Mammary epithelial cell (primary cell): ENCODE measurements at regions of chr14 and their contacts with region 1.

Region 1: GRCh38 chr14:77660754-77661153 is 44.3 kb upstream of the SPTLC2 start:
- DNase-seq: no peak
- H3K4me3 ChIP-seq: no peak overlapping the region
- H3K27ac ChIP-seq: no peak overlapping the region
- H3K4me1 ChIP-seq: peaks cover 14% of the 10 kb centered on the region
- H3K27me3 ChIP-seq: no peaks in the 10 kb centered on the region
- CTCF ChIP-seq: no peak

Region 2: GRCh38 chr14:77799863-77800730 is 139.3 kb after region 1 on chr14 and contains the start of gene ADCK1:
- CTCF ChIA-PET with region 1: no interaction called
- dilution Hi-C with region 1: no loop called
- in situ Hi-C with region 1: no loop called
- intact Hi-C with region 1: loop called (anchors 5 kb)
- DNase-seq: peak; percentile 70
- H3K4me3 ChIP-seq: peak within 1 kb of the TSS; percentile 37 to 69 (median 64)
- H3K27ac ChIP-seq: peak within 1 kb of the TSS; percentile 32
- H3K4me1 ChIP-seq: peaks cover 6% of the 10 kb centered on the region
- H3K27me3 ChIP-seq: no peaks in the 10 kb centered on the region
- CTCF ChIP-seq: peak in 1 of 2 donors; percentile 57
- total RNA-seq, gene ADCK1: 5.7 to 8.5 TPM